Dendritic cell treated with granulocyte-macrophage colony-stimulating factor and Interleukin-4, amounts not matched to agents 40 ng/mL and 50 ng/mL, for 4 days (primary cell): ENCODE measurements at regions of chr4 and their contacts with region 1.

Region 1: GRCh38 chr4:99054428-99054994 is 34.1 kb downstream of the ADH5 start:
- H3K4me3 Mint-ChIP-seq: no peak overlapping the region
- H3K27ac Mint-ChIP-seq: no peak overlapping the region
- H3K4me1 Mint-ChIP-seq: peaks cover 8% of the 10 kb centered on the region
- H3K27me3 Mint-ChIP-seq: no peaks in the 10 kb centered on the region

Region 2: GRCh38 chr4:98150092-98150761 is 904.3 kb before region 1 on chr4:
- intact Hi-C with region 1: loop called (anchors 5 kb)
- H3K4me3 Mint-ChIP-seq: no peak overlapping the region
- H3K27ac Mint-ChIP-seq: no peak overlapping the region
- H3K4me1 Mint-ChIP-seq: peaks cover 5% of the 10 kb centered on the region
- H3K27me3 Mint-ChIP-seq: peaks cover 1% of the 10 kb centered on the region

Region 3: DNA sequence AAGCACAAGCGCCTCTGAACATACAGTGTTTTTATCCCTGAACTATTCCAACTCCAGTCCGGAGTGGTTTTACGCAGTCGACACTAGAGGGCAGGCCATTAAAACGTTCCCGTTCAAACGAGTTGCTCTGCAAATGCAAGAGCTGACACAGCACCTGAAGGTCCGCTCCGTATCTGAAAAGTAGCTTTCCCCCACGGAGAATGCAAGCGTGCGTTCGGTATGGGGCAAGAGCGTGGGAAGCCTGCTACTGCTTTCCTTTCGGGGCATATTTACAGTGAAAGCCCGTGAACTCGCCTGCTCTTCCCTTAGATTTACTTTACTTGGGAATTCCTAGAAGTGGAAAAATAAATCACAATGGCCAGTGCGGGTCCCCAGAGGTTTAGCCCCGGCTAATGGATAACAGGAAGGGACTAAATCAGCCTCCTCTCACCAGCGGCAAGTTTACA is 586.9 kb before region 1 on chr4:
- intact Hi-C with region 1: loop called (anchors 2 kb)
- H3K4me3 Mint-ChIP-seq: peak overlapping the region; percentile 64
- H3K27ac Mint-ChIP-seq: no peak overlapping the region
- H3K4me1 Mint-ChIP-seq: peaks cover 6% of the 10 kb centered on the region
- H3K27me3 Mint-ChIP-seq: peaks cover 8% of the 10 kb centered on the region

Region 4: GRCh38 chr4:98939892-98940298 is 114.6 kb before region 1 on chr4:
- intact Hi-C with region 1: loop called (anchors 5 kb)
- H3K4me3 Mint-ChIP-seq: no peak overlapping the region
- H3K27ac Mint-ChIP-seq: no peak overlapping the region
- H3K4me1 Mint-ChIP-seq: peaks cover 27% of the 10 kb centered on the region
- H3K27me3 Mint-ChIP-seq: no peaks in the 10 kb centered on the region

Region 5: DNA sequence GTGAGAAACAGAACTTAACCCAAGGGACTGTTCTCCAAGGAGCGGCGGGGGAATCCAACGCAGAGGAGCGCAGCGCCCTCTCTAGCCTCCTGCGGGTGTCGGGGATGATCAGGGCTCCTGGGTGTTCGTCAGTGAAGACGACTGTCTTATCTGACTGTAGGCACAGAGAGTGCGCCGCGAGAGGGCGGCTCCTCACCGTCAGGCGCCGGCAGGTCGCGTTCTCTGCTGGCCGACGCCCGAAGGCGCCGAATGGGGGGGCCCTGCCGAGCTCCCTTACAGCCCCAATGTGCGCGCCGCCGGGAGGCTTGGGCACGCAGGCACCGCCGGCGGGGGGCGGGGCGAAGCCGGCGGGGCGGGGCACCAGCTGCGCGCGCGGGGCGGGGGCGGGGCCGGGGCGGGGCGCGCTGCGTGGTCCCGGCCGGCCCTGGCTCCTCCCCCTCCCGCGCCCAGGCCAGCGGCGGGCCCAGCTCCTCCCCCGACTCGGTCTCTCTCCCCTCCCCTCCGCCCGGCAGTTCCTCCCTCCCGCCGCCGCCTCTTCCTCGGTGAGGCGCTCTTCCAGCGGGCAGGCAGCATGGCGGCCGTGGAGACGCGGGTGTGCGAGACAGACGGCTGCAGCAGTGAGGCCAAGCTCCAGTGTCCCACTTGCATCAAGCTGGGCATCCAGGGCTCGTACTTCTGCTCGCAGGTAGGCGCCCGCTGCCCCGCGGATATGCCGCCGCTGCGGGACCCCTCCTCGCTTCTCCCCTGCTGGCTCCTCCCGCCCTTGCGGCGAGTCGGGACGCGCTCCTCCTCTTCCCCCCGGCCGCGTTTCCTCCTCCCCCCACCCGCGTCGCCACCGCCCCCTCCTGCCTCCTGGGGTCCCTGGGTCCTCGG is 59.1 kb before region 1 on chr4 and contains the start of gene METAP1:
- intact Hi-C with region 1: loop called (anchors 1 kb)
- H3K4me3 Mint-ChIP-seq: peak within 1 kb of the TSS; percentile 86
- H3K27ac Mint-ChIP-seq: peak within 1 kb of the TSS; percentile 94
- H3K4me1 Mint-ChIP-seq: peaks cover 27% of the 10 kb centered on the region
- H3K27me3 Mint-ChIP-seq: peaks cover 3% of the 10 kb centered on the region

Region 6: GRCh38 chr4:99949034-99949998 is 894.8 kb after region 1 on chr4:
- intact Hi-C with region 1: no loop called
- H3K4me3 Mint-ChIP-seq: no peak overlapping the region
- H3K27ac Mint-ChIP-seq: no peak overlapping the region
- H3K4me1 Mint-ChIP-seq: peaks cover 30% of the 10 kb centered on the region
- H3K27me3 Mint-ChIP-seq: no peaks in the 10 kb centered on the region